Posterior vena cava (tissue), 2 donors: ENCODE measurements at regions of chr10 and their contacts with region 1.

Region 1: GRCh38 chr10:53638006-53638405 is 865.4 kb upstream of the MBL2 start:
- DNase-seq: no peak

Region 2: DNA sequence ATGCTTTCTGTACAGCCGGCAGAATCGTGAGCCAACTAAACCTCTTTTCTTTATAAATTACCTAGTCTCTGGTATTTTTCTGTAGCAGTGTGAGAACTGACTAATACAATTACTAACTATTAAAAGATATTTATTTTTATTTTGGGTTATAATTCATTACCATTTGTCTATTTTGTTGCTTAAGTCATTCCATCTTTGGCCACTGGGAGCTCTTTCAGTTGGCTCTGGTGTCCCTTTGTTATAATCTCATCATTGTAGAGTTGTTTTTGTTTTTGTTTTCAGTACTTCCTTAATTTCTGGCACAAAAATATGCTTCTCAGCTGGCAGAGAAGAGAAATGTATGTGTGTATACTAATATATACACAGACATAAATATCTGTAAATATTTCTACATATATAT is 57.5 kb before region 1 on chr10:
- intact Hi-C with region 1: no loop called
- DNase-seq: no peak

Region 3: GRCh38 chr10:53598914-53599313 is 39.1 kb before region 1 on chr10:
- intact Hi-C with region 1: no loop called
- DNase-seq: no peak

Region 4: DNA sequence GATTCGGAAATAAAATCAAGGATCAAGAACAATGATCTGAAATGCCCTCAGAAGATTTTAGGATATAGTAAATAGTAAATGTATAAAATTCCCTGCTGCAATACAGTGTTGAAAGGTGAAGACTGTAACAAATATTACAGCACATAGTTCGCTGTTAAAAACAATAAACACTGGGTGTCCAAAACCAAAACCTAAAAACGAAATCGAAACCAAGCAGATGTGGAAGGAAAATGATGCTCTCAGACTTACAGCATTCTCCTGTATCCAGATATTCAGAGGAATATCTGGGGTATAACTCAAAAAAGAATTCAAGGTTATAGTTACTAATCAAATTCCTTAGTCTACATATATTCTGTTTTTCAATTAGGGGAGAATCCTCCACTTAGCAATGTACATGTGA is 1871.2 kb after region 1 on chr10:
- intact Hi-C with region 1: loop called in 1 of 2 experiments (anchors 5 kb)
- DNase-seq: no peak